ENCODE measurements at regions of chr9 and their contacts with region 1.

Region 1: GRCh38 chr9:35657546-35658136 is at the start of gene RMRP:
- DNase-seq: peak; percentile 89
- H3K4me3 Mint-ChIP-seq: peak within 1 kb of the TSS; percentile 93
- H3K27ac Mint-ChIP-seq: peak within 1 kb of the TSS; percentile 94
- H3K4me1 Mint-ChIP-seq: peaks cover 62% of the 10 kb centered on the region
- H3K27me3 Mint-ChIP-seq: peaks cover 4% of the 10 kb centered on the region
- total RNA-seq, gene RMRP: 9,885 to 10,678 TPM

Region 2: DNA sequence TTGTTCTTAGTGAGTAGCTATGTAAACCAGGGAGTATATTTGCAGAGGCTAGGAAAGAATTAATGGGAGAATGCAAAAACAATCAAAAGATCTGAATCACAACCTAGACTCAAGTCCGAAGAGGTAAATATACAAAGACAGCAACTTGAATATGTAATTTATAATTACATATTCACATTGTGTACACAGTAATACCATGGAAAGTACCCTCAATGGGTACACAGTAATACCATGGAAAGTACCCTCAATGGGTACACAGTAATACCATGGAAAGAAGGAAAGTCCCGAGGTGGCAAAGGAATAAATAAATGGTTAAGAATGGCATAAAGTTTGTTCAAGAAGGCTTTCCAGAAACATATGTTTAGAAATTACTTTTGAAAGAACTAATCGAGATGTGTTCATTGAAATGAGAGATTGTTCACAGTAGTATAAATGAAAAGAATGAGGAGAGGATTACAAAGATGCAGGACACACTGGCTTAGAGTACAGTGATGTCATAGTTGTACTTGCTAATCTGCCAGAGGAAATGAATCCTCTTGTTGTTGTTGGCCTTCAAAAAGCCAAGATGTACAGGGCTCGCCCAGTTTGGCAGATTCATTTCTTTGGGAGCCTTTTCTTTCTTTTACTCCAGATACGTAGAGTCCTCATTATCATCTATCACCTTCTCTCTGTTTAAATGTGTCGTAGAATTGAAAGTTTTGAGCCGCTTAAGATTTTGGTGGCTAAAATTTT is 379.8 kb before region 1 on chr9:
- CTCF ChIA-PET with region 1: no interaction called
- POLR2A ChIA-PET with region 1: no interaction called
- DNase-seq: no peak
- H3K4me3 Mint-ChIP-seq: no peak overlapping the region
- H3K27ac Mint-ChIP-seq: no peak overlapping the region
- H3K4me1 Mint-ChIP-seq: peaks cover 10% of the 10 kb centered on the region
- H3K27me3 Mint-ChIP-seq: peaks cover 10% of the 10 kb centered on the region

Region 3: DNA sequence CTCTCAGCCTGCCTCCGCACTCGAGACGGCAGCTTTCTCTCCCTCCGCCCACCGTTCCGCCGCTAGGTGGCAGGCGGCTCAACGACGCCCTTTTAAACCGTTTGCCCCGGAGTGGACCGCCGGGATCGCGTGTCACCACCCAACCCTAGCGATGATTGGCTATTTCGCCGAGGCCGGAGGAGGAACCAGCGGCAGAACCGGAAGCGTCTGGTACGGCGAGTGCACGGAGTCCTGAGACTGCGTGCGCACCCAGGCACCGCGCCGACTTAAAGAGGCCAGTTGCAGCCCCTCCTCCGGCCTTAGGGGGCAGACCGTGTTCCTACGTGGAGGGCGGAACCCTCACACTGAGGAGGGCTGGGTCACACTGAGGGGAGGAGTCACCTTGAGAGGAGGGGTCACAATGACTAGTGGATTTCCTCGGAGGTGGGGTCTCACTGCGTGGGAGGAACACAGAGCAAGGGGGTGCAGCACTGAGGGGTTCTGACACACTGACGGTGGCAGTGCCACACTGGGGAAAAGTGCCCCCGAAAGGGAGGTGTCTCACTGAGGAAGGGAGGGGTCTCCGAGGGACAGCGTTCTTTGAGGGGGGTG is 53.6 kb before region 1 on chr9:
- CTCF ChIA-PET with region 1: interaction called, 22 read pairs
- POLR2A ChIA-PET with region 1: interaction called, 12 read pairs
- DNase-seq: peak; percentile 100
- H3K4me3 Mint-ChIP-seq: peak overlapping the region; percentile 96
- H3K27ac Mint-ChIP-seq: peak overlapping the region; percentile 99
- H3K4me1 Mint-ChIP-seq: peaks cover 30% of the 10 kb centered on the region
- H3K27me3 Mint-ChIP-seq: no peaks in the 10 kb centered on the region

Region 4: DNA sequence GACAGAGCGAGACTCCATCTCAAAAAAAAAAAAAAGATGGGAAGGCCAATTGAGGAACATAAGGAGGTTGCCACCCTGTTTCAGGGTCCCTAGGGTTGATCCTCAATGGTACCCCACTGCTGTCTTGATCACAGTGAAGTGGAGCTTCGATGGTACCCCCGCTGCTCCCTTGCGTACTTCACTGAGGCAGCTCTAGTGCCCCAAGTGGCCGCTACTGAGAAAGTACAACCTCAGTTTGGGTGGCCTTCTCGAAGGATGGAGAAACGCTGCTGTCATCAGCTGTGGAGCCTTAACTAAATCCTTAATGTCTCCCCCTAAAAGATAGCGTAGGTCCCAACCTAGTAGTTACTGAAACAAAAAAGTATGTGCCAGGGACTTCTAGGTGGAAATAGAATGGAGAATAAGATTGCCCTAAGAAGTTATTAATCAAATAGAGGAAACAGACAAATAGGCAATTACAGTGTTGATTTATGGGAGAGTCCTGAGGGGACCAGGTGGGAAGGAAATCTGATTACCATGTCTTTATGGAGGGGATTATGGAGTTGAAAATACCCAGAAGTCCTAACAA is 46.3 kb before region 1 on chr9:
- CTCF ChIA-PET with region 1: interaction called, 40 read pairs
- POLR2A ChIA-PET with region 1: interaction called, 83 read pairs
- DNase-seq: peak; percentile 61
- H3K4me3 Mint-ChIP-seq: no peak overlapping the region
- H3K27ac Mint-ChIP-seq: no peak overlapping the region
- H3K4me1 Mint-ChIP-seq: peaks cover 16% of the 10 kb centered on the region
- H3K27me3 Mint-ChIP-seq: peaks cover 3% of the 10 kb centered on the region

Region 5: DNA sequence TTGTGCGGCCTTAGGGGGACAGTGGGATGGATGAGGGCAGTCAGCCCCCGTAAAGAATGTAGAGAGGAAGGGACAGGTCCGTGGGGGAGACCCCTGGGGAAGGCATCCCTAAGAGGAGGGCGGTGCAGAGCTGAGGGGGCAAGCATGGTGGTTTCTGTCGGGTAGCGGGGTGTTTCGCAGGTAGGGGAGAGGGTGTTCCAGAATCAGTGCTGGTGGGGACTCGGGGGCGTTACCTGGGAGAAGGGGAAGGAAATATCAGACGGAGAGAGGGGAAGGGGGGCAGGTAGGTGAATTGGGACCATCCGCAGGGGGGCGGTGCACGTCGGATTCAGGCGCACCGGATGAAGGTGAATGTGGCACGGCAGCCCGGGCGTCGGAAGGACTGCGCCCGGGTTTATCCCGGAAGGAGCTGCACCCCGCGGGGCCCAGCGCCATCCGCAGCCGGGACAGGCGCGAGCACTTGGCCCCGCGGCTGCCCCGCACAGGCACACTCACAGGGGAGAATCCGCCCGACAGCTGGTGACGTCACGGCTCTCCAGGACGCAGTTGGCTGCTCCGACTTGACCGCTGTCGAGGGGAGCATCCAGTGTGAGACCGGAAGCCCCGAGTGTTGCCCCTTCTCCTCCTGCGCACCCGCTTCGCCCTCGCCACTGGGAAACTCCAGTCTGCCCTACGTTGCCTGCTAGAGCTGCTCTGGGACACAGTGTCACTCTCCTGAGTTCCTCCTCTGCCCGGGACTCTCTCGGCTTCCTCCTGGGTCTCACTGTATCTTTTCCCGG is 40.8 kb before region 1 on chr9:
- CTCF ChIA-PET with region 1: interaction called, 40 read pairs
- POLR2A ChIA-PET with region 1: interaction called, 83 read pairs
- DNase-seq: peak; percentile 74
- H3K4me3 Mint-ChIP-seq: peak overlapping the region; percentile 73
- H3K27ac Mint-ChIP-seq: peak overlapping the region; percentile 42
- H3K4me1 Mint-ChIP-seq: peaks cover 43% of the 10 kb centered on the region
- H3K27me3 Mint-ChIP-seq: peaks cover 3% of the 10 kb centered on the region

Region 6: DNA sequence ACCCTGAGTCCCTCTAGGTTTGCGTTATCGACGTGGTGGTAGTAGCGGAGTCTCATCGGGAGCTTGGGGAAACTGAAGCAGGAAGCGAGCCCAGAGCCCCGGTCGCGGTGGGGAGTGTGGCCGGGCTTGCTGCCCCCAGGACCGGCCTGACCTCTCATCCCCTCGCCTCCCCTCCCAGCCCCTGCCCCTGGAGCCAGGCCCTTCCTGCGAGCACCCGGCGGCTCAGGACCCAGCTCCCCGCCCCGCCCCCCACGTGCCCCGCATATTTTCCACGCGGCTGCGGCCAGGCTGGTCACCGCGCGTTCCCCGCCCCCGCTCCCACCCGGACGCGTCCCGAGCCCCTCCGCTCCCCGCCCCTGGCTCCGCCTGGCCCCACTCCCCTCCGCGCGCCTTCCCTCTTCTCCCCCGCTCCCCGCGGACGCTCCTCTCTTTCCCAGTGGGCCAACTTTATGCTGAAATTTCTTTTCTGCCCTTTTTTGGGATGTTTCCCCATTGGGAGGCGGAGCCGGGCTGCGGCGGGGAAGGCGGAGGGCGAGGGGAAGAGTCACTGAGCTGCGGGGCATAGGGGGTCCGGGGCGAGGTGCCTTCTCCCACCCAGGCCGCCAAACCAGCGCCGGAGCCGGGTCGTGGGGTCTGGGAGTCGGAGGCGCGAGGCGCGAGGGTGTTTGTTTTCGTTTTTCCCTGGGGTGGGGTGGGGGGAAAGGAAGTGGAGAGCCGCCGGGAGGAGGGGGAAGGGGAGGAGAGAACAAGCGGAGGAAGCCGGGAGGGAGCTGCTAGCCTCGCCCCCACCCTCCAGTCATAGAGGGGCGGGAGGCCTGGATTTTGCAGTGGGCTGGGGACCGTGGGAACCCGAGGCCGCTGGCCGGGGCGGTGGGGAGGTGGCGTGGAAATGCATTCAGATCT is 33.0 kb after region 1 on chr9:
- CTCF ChIA-PET with region 1: interaction called, 60 read pairs
- POLR2A ChIA-PET with region 1: interaction called, 9 read pairs
- DNase-seq: peak; percentile 42
- H3K4me3 Mint-ChIP-seq: peak overlapping the region; percentile 75
- H3K27ac Mint-ChIP-seq: peak overlapping the region; percentile 21
- H3K4me1 Mint-ChIP-seq: peaks cover 24% of the 10 kb centered on the region
- H3K27me3 Mint-ChIP-seq: no peaks in the 10 kb centered on the region

Region 7: DNA sequence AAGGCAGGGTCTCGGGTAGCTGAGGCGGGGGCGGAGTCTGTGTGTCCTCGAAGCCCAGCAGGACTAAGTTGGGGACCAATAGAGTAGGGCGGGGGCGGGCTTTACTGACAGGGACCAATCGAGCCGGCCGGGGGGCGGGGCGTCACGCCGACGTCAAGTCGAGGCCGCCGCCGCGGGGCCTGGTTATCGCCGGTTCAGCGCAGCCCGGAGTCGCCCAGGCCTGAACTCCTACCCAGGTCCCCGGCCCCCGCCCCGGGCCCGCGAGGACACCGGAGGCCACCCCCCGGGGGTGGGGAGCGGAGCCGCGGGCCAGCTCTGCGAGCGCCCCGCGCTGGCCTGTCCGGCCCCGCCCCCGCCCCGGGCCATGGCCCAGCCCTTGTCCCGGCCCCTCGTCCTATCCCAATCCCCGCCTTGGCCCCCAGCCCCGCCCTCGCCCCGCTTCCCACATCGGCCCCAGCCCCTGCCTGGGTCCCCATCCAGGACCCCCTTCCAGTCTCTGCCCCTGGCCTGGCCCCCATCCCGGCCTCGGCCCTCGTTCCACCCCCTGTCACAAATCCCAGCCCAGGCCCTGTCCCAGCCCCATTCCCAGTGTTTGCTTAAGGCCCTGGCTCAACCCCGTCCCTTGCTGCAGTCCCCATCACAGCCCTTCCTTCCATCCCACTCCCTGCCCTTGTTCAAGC is 171.6 kb after region 1 on chr9 and contains the start of gene TMEM8B:
- CTCF ChIA-PET with region 1: no interaction called
- POLR2A ChIA-PET with region 1: no interaction called
- DNase-seq: peak; percentile 94
- H3K4me3 Mint-ChIP-seq: peak within 1 kb of the TSS; percentile 82
- H3K27ac Mint-ChIP-seq: peak within 1 kb of the TSS; percentile 53
- H3K4me1 Mint-ChIP-seq: peaks cover 23% of the 10 kb centered on the region
- H3K27me3 Mint-ChIP-seq: peaks cover 5% of the 10 kb centered on the region
- total RNA-seq, gene TMEM8B: 3.1 to 3.2 TPM